Activated B cell treated with CpG ODN at 0.5 μM for 24 hours (primary cell): ENCODE measurements at regions of chr11 and their contacts with region 1.

Region 1: GRCh38 chr11:65625628-65626342 is 10.2 kb downstream of the PCNX3 start:
- DNase-seq: peak; percentile 65
- ATAC-seq: peak; percentile 96
- H3K4me3 Mint-ChIP-seq: no peak overlapping the region
- H3K27ac Mint-ChIP-seq: peak overlapping the region; percentile 52
- H3K4me1 Mint-ChIP-seq: peaks cover 8% of the 10 kb centered on the region
- H3K27me3 Mint-ChIP-seq: no peaks in the 10 kb centered on the region
- CTCF ChIP-seq: no peak

Region 2: DNA sequence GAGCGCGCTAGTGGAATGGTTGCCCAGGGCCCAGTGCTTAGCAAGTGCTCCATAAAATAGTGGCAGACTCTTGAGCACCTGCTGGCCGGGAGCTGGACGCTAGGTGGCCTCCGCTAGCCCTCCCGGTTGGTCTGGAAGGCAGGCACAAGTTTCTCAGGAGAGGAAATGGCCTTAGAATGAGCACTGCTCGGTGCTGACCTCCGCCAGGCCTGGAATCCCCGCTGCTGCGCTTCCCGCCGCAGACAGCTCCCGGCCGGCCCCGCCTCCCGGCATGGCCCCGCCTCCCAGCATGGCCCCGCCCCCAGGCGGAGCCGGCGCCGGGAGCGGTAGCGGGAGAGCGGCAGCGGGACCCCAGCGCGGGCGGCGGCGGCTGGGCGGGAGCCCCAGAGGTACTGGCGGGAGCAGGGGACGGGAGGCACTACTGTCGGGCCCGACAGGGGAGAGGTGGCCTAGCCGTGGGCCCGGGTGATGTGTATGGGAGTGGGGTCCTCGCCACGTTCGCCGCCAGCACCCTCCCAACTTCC is 12.1 kb after region 1 on chr11 and contains the start of gene SIPA1:
- CTCF ChIA-PET with region 1: interaction called, 29 read pairs
- POLR2A ChIA-PET with region 1: interaction called, 62 read pairs
- intact Hi-C with region 1: loop called (anchors 1 kb)
- DNase-seq: peak; percentile 86
- ATAC-seq: peak; percentile 35
- H3K4me3 Mint-ChIP-seq: peak within 1 kb of the TSS; percentile 94
- H3K27ac Mint-ChIP-seq: peak within 1 kb of the TSS; percentile 96
- H3K4me1 Mint-ChIP-seq: peaks cover 51% of the 10 kb centered on the region
- H3K27me3 Mint-ChIP-seq: no peaks in the 10 kb centered on the region
- CTCF ChIP-seq: no peak
- total RNA-seq, gene SIPA1: 236 and 252 TPM in 2 replicates

Region 3: DNA sequence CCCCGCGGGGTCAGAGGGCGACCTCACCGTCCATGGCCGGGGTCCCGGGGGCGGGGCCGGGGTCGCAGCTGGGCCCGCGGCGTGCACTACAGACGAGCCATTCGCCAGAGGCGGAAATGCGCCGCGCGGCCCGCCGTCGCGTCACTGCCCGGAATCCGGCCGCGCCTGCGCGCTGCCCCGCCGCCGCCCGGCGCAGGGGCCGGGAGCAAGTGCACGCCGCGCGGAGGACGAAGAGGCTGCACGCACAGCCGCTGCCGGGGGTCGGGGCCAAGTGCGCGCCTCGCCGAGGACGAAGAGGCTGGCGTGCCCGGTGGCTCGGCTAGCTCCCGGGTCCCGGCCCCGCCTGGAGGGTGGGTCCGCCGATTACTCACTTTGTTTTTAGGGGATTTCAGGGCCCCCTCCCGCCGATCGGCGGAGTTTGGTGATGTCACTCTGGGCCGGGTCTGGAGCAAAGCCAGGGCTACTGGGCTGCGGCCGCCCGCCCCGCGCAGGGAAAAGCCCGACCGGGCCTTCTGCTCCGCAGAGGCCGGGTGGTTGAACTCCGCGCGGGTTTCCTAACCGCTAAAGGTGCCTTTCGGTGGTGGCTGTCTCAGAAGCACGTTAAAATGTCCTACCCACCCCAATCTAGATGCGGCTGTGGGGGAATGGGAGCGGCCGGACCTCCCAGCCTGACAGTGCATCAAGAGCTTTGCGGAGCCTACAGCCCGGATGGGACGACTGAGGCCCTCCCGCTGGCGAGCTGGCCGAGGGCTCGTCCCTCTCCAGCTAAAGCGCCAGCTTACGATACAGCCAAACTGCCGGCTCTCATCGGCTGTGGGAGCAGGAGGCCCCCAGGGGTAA is 37.2 kb after region 1 on chr11 and contains the start of gene RELA:
- CTCF ChIA-PET with region 1: interaction called, 3 read pairs
- POLR2A ChIA-PET with region 1: interaction called, 617 read pairs
- intact Hi-C with region 1: loop called (anchors 1 kb)
- DNase-seq: peak; percentile 91
- ATAC-seq: peak; percentile 87
- H3K4me3 Mint-ChIP-seq: peak within 1 kb of the TSS; percentile 87
- H3K27ac Mint-ChIP-seq: peak within 1 kb of the TSS; percentile 93
- H3K4me1 Mint-ChIP-seq: peaks cover 35% of the 10 kb centered on the region
- H3K27me3 Mint-ChIP-seq: no peaks in the 10 kb centered on the region
- CTCF ChIP-seq: no peak
- total RNA-seq, gene RELA: 110 and 119 TPM in 2 replicates

Region 4: DNA sequence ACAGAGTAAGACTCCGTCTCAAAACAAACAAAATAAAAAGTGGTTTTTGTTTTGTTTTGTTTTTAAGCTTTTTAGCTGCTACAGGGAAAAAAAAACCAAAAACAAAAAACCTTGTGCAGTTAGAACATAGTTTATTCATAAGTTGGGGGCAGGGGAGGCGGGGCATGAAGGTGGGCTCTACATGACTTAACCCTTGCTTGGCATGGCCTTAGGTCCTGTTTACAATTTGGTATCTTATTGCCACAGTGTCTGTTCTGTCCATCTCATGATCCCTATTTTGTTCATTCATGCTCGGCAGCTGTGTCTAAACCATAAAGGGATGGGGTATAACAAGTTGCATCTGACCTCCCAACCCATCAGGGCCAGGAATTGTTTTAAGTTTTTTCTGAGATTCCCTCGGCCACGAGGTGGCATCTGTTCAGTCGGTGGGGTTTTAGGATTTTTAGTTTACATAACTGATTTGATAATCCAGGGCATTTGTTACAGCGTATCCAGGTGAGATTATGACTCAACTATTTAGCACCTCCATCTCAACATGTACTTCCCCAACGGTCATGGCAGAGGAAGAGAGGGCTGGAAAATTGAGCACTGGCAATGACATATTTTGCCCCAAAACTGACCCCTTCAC is 148.1 kb after region 1 on chr11:
- CTCF ChIA-PET with region 1: interaction called, 18 read pairs
- POLR2A ChIA-PET with region 1: no interaction called
- intact Hi-C with region 1: no loop called
- DNase-seq: no peak
- ATAC-seq: no peak
- H3K4me3 Mint-ChIP-seq: no peak overlapping the region
- H3K27ac Mint-ChIP-seq: no peak overlapping the region
- H3K4me1 Mint-ChIP-seq: peaks cover 9% of the 10 kb centered on the region
- H3K27me3 Mint-ChIP-seq: no peaks in the 10 kb centered on the region
- CTCF ChIP-seq: no peak